ENCODE measurements at regions of chr2 and their contacts with region 1.

Region 1: GRCh38 chr2:9142551-9143263 is 63.9 kb upstream of the ASAP2 start:
- DNase-seq: peak; percentile 65
- H3K4me3 ChIP-seq: no peak overlapping the region
- H3K27ac ChIP-seq: peak overlapping the region in 1 of 2 donors; percentile 42
- H3K4me1 ChIP-seq: no peaks in the 10 kb centered on the region
- H3K27me3 ChIP-seq: peaks cover 2% of the 10 kb centered on the region
- CTCF ChIP-seq: peak; percentile 95 to 99 (median 98)
- POLR2A ChIP-seq: no peak

Region 2: DNA sequence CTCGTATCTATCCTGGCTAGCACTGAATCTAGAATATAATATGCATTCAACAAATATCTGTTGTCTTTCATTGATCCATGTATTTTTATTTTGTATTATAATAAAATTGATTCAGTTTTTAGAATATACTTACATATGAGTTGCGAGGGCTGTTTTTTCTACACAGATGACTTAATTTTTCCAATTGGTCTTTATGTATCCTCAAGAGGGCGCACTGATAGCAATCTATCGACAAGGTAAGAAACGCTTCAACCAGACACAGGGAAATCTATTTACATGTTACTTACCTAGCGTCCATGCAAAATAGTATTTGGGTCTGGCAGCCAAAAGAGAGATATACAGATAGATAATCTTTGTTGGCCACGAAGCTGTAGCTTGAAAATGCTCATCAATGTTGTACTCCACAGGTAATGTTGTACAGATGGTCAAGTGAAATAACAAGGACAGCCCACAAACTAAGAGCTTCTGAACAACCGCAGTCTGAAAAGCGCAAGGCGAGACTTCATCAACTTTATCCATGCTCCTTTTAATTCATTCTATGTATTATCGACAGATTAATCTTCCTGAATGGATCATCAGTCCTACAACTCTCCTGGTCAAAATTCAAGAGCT is 269.8 kb before region 1 on chr2:
- intact Hi-C with region 1: loop called (anchors 5 kb)
- DNase-seq: peak; percentile 15
- H3K4me3 ChIP-seq: no peak overlapping the region
- H3K27ac ChIP-seq: no peak overlapping the region
- H3K4me1 ChIP-seq: no peaks in the 10 kb centered on the region
- H3K27me3 ChIP-seq: no peaks in the 10 kb centered on the region
- CTCF ChIP-seq: peak; percentile 12 to 60 (median 50)
- POLR2A ChIP-seq: no peak

Region 3: DNA sequence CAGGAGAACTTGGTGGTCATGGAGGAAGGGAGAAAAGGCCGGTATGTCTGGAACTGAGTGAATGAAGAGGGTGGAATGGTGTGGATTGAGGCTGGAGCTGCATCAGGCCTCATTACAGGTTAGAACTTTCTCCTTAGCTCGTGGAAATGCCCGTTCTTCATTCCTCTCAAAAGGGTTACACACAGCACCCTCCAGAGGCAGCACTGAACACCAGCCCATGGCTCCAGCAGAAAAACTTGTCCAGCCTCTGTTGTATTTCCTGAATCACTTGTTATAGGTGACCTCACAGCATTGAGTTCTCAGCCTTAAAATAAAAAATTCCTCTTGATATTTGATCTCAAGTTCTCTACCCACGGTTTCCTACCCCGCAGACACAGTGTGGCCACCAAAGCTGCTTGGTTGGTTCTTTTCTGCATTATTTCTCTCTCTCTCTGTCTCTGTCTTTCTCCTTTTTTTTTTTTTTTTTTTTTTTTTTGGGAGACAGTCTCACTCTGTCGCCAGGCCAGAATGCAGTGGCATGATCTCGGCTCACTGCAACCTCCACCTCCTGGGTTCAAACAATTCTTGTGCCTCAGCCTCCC is 191.0 kb after region 1 on chr2:
- intact Hi-C with region 1: loop called (anchors 5 kb)
- DNase-seq: peak; percentile 72
- H3K4me3 ChIP-seq: no peak overlapping the region
- H3K27ac ChIP-seq: no peak overlapping the region
- H3K4me1 ChIP-seq: peaks cover 7% of the 10 kb centered on the region
- H3K27me3 ChIP-seq: no peaks in the 10 kb centered on the region
- CTCF ChIP-seq: peak; percentile 23 to 83 (median 62)
- POLR2A ChIP-seq: no peak

Measured in prostate gland (tissue), 2 donors.